OCI-LY7 (cell line): ENCODE measurements at regions of chr17 and their contacts with region 1.

Region 1: DNA sequence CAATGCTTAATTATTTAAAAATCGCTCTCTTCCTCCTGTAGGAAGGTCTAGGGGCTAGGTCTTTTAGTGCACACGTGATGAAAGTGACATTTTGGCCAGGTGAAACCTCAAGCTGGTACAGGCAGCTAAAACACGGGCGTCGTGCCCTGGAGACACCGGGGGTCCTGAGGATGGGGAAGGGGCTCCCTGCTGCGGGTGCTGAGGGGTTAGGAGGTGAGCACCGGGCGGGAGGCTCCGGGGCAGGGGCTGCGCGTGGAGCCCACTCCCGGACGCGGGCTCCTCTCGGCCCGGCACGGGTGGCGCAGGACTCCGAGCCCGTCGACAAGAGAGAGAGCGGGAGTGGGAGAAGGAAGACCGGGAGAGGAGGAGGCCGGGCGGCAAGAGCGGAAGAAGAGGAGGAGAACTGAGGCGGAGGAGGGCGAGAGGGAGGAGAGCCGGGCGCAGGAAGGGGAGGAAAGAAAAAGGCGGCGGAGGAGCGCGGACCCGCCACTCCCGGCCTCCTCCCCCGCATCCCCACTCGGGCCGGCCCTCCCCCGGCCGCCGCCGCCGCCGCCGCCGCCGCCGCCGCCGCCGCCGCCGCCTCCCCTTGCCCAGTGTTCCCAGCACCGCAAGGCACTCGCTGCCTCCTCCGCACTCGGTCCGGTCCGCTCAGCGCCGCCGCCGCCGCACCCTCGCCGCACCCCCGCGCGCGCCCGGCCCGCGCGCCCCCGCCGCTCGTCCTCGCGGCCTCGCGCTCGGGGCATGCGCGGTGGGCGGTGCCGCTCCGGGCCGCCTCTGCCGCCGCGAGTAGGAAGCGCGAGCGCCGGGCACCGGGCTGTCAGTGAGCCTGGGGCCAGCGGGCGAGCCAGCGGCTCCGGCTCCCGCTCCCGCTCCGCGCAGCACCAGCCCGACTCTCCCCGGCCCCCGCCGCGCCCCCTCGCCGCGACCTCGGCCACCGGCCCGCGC is at the start of gene PRKCA:
- DNase-seq: peak; percentile 81
- H3K4me3 ChIP-seq: peak within 1 kb of the TSS; percentile 78
- H3K27ac ChIP-seq: no peak within 1 kb of the TSS
- H3K4me1 ChIP-seq: peaks cover 28% of the 10 kb centered on the region
- CTCF ChIP-seq: no peak
- total RNA-seq, gene PRKCA: 5.2 and 6.6 TPM in 2 replicates

Region 2: GRCh38 chr17:66187717-66188116 is 114.4 kb before region 1 on chr17:
- CTCF ChIA-PET with region 1: interaction called, 10 read pairs
- POLR2A ChIA-PET with region 1: no interaction called
- intact Hi-C with region 1: no loop called
- DNase-seq: no peak
- H3K4me3 ChIP-seq: no peak overlapping the region
- H3K27ac ChIP-seq: no peak overlapping the region
- H3K4me1 ChIP-seq: peaks cover 25% of the 10 kb centered on the region
- CTCF ChIP-seq: no peak

Region 3: GRCh38 chr17:66441101-66441661 is 139.1 kb after region 1 on chr17:
- CTCF ChIA-PET with region 1: no interaction called
- POLR2A ChIA-PET with region 1: no interaction called
- intact Hi-C with region 1: loop called (anchors 2 kb)
- DNase-seq: peak; percentile 91
- H3K4me3 ChIP-seq: peak overlapping the region; percentile 61
- H3K27ac ChIP-seq: peak overlapping the region; percentile 97
- H3K4me1 ChIP-seq: peaks cover 85% of the 10 kb centered on the region
- CTCF ChIP-seq: no peak

Region 4: GRCh38 chr17:66541461-66542128 is 239.5 kb after region 1 on chr17:
- CTCF ChIA-PET with region 1: no interaction called
- POLR2A ChIA-PET with region 1: interaction called, 3 read pairs
- intact Hi-C with region 1: loop called (anchors 2 kb)
- DNase-seq: peak; percentile 41
- H3K4me3 ChIP-seq: no peak overlapping the region
- H3K27ac ChIP-seq: peak overlapping the region; percentile 59
- H3K4me1 ChIP-seq: peaks cover 38% of the 10 kb centered on the region
- CTCF ChIP-seq: no peak

Region 5: DNA sequence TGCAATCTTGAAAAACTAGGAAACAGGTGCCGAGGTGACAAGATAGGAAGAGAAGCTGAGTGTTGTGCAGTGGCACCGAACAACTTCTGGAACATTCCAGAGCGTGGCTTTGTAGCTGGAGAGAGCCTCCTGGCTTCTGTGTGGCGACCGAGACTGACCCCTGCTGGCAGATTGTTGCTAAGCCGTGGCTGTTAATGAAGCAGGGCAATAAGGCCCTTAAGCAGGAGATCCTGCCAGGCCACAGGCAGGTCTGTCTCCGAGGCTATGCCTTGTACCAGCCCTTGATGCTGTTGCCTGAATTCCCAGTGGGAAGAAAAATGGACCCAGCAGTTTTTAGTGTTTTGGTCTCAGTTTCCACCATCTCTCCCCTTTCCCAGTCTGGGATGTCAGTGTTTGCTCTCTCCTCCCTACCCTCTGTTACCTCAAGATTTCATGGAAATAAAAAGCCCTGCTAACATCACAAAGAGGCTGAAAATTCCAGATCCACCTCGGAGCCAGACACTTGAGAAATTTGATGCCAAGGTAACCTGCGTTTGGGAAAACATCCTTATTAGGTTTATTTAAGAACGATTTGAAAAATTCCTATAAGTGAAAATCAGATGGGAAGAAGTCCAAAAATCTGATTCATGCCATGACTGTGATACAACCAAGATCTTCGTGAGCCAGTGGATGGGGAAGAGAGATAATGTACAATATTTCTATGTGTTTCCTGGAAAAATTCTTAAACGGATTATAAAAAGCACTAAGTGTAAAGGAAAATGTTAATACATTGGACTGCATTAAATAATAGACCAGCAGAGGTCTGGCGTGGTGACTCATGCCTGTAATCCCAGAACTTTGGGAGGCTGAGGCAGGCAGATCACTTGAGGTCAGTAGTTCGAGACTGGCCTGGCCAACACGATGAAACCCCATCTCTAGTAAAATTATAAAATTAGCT is 265.4 kb after region 1 on chr17:
- CTCF ChIA-PET with region 1: no interaction called
- POLR2A ChIA-PET with region 1: no interaction called
- intact Hi-C with region 1: loop called (anchors 5 kb)
- DNase-seq: peak; percentile 73
- H3K4me3 ChIP-seq: no peak overlapping the region
- H3K27ac ChIP-seq: no peak overlapping the region
- H3K4me1 ChIP-seq: no peaks in the 10 kb centered on the region
- CTCF ChIP-seq: peak; percentile 93